ENCODE measurements at regions of chr12 and their contacts with region 1.

Region 1: DNA sequence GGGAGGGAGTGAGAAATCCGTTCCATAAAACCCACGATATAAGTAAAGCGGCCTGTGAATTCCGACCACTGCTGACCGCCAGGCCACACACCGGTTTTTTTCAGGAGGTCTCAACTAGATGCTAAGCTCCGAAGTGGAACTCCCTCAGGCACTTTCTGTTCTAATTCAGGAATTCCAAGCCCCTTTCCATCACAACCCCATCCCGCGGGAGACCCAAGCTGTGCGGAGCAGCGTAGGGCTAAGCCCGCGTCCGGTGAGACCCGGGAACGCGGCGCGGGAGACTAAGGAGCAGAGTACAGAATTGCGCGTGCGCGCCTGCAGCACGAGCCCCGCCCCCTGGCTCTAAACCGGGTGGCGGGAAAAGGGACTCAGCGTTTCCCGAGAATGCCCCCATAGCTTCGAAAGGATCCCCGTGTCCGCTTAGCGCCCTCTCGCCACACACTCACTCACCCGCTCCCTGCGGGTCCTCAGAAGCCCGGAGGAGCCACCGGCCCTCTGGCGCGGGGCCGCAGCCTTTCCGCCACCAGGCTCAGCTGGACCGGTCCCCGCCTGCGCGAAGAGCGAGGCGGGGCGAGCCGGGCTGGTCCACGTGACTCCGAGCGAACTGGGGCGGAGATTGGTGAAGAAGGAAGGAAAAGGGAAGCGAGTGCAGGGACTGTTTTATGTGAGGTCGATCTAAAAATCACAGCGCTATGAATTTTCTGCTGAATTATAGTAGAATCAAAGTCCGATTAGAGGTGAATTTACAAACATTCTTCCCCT is at the start of gene TIMELESS:
- DNase-seq: peak; percentile 86
- ATAC-seq: peak; percentile 97
- H3K4me3 Mint-ChIP-seq: peak within 1 kb of the TSS; percentile 88
- H3K27ac Mint-ChIP-seq: peak within 1 kb of the TSS; percentile 93
- H3K4me1 Mint-ChIP-seq: peaks cover 24% of the 10 kb centered on the region
- H3K27me3 Mint-ChIP-seq: no peaks in the 10 kb centered on the region
- CTCF ChIP-seq: no peak
- total RNA-seq, gene TIMELESS: 48.7 to 49.2 TPM

Region 2: GRCh38 chr12:56462565-56462964 is 13.5 kb after region 1 on chr12:
- CTCF ChIA-PET with region 1: interaction called, 35 read pairs
- POLR2A ChIA-PET with region 1: interaction called, 8 read pairs
- intact Hi-C with region 1: no loop called
- DNase-seq: no peak
- ATAC-seq: no peak
- H3K4me3 Mint-ChIP-seq: no peak overlapping the region
- H3K27ac Mint-ChIP-seq: no peak overlapping the region
- H3K4me1 Mint-ChIP-seq: peaks cover 7% of the 10 kb centered on the region
- H3K27me3 Mint-ChIP-seq: no peaks in the 10 kb centered on the region
- CTCF ChIP-seq: no peak

Region 3: GRCh38 chr12:56510786-56511185 is 61.7 kb after region 1 on chr12:
- CTCF ChIA-PET with region 1: no interaction called
- POLR2A ChIA-PET with region 1: no interaction called
- intact Hi-C with region 1: no loop called
- DNase-seq: no peak
- ATAC-seq: no peak
- H3K4me3 Mint-ChIP-seq: no peak overlapping the region
- H3K27ac Mint-ChIP-seq: no peak overlapping the region
- H3K4me1 Mint-ChIP-seq: peaks cover 4% of the 10 kb centered on the region
- H3K27me3 Mint-ChIP-seq: peaks cover 1% of the 10 kb centered on the region
- CTCF ChIP-seq: no peak

Measured in activated CD8-positive, alpha-beta T cell treated with anti-CD3 and anti-CD28 coated beads for 36 hours (primary cell).